ENCODE measurements at regions of chr3 and their contacts with region 1.

Region 1: DNA sequence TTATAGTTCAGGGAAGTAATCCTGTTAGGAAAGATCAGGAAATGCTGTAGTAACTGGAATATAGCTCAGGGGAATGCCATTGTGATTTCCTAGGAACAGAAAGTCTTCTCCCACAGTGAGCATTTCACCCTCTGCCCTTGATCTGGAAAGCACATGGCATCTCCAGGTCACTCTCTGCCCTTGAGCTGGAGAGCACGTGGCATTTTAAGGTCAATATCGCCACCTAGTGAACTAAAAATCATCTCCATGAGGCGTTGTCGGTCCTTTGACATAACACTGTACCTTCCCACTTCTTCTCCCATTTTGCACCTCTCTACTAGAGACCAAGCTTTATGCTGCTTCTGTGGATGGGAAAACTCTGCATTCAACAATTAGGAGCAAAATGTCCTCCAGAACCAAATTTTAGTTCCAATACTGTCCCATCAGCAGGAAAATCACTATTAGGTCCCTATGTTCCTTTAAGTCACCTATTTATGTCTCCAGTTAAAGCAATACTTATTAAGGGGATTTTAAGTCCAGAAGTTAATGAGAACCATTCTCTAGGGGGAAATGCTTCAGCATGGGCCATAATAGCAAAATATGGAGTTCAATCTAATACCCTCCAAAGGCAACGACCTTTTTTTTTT is 54.7 kb upstream of the GK5 start:
- DNase-seq: peak; percentile 76
- ATAC-seq: peak; percentile 91
- H3K4me3 ChIP-seq: no peak overlapping the region
- H3K27ac ChIP-seq: no peak overlapping the region
- H3K4me1 ChIP-seq: no peaks in the 10 kb centered on the region
- H3K27me3 ChIP-seq: no peaks in the 10 kb centered on the region
- CTCF ChIP-seq: peak; percentile 69

Region 2: GRCh38 chr3:141959921-141960554 is 320.0 kb before region 1 on chr3:
- CTCF ChIA-PET with region 1: no interaction called
- POLR2A ChIA-PET with region 1: no interaction called
- intact Hi-C with region 1: loop called (anchors 5 kb)
- DNase-seq: peak; percentile 68
- ATAC-seq: peak; percentile 79
- H3K4me3 ChIP-seq: no peak overlapping the region
- H3K27ac ChIP-seq: peak overlapping the region; percentile 0; the same call in 1 of the 2 replicates
- H3K4me1 ChIP-seq: peaks cover 18% of the 10 kb centered on the region
- H3K27me3 ChIP-seq: no peaks in the 10 kb centered on the region
- CTCF ChIP-seq: no peak

Region 3: GRCh38 chr3:142022381-142022780 is 257.7 kb before region 1 on chr3:
- CTCF ChIA-PET with region 1: no interaction called
- POLR2A ChIA-PET with region 1: no interaction called
- intact Hi-C with region 1: loop called (anchors 2 kb)
- DNase-seq: peak; percentile 6
- ATAC-seq: peak; percentile 53
- H3K4me3 ChIP-seq: no peak overlapping the region
- H3K27ac ChIP-seq: no peak overlapping the region
- H3K4me1 ChIP-seq: no peaks in the 10 kb centered on the region
- H3K27me3 ChIP-seq: no peaks in the 10 kb centered on the region
- CTCF ChIP-seq: peak; percentile 26; the same call in 1 of the 2 replicates

Region 4: GRCh38 chr3:142112596-142113098 is 167.4 kb before region 1 on chr3:
- CTCF ChIA-PET with region 1: no interaction called
- POLR2A ChIA-PET with region 1: no interaction called
- intact Hi-C with region 1: no loop called
- DNase-seq: no peak
- ATAC-seq: no peak
- H3K4me3 ChIP-seq: no peak overlapping the region
- H3K27ac ChIP-seq: no peak overlapping the region
- H3K4me1 ChIP-seq: peaks cover 5% of the 10 kb centered on the region
- H3K27me3 ChIP-seq: no peaks in the 10 kb centered on the region
- CTCF ChIP-seq: no peak

Region 5: DNA sequence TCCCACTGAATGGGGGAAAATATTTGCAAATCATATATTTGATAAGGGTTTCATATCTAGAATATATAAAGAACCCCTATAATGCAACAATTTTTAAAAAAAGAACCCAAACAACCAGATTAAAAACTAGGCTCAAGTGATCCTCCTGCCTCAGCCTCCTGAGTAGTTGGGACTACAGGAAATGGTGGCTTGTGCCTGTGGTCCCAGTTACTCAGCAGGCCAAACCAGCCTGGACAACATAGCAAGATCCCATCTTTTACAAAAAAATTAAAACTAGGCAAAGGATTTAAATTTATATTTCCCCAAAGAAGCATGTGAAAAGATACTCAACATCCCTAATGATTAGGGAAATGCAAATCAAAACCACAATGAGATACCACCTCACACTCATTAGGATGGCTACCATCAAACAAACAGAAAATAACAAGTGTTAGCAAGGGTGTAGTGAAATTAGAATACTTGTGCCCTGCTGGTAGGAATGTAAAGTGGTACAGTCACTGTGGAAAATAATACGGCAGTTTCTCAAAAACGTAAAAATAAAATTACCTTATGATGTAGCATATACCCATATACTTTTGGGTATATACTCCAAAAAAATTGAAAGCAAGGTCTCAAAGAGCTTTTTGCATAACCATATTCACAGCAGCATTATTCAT is 150.4 kb before region 1 on chr3:
- CTCF ChIA-PET with region 1: interaction called, 5 read pairs
- POLR2A ChIA-PET with region 1: no interaction called
- intact Hi-C with region 1: loop called (anchors 1 kb)
- DNase-seq: no peak
- ATAC-seq: no peak
- H3K4me3 ChIP-seq: no peak overlapping the region
- H3K27ac ChIP-seq: no peak overlapping the region
- H3K4me1 ChIP-seq: no peaks in the 10 kb centered on the region
- H3K27me3 ChIP-seq: no peaks in the 10 kb centered on the region
- CTCF ChIP-seq: peak; percentile 27; the same call in 1 of the 2 replicates

Region 6: GRCh38 chr3:142180761-142181362 is 99.2 kb before region 1 on chr3:
- CTCF ChIA-PET with region 1: no interaction called
- POLR2A ChIA-PET with region 1: no interaction called
- intact Hi-C with region 1: loop called (anchors 2 kb)
- DNase-seq: peak; percentile 37
- ATAC-seq: peak; percentile 40; the same call in 1 of the 2 replicates
- H3K4me3 ChIP-seq: no peak overlapping the region
- H3K27ac ChIP-seq: no peak overlapping the region
- H3K4me1 ChIP-seq: no peaks in the 10 kb centered on the region
- H3K27me3 ChIP-seq: no peaks in the 10 kb centered on the region
- CTCF ChIP-seq: peak; percentile 64

Region 7: DNA sequence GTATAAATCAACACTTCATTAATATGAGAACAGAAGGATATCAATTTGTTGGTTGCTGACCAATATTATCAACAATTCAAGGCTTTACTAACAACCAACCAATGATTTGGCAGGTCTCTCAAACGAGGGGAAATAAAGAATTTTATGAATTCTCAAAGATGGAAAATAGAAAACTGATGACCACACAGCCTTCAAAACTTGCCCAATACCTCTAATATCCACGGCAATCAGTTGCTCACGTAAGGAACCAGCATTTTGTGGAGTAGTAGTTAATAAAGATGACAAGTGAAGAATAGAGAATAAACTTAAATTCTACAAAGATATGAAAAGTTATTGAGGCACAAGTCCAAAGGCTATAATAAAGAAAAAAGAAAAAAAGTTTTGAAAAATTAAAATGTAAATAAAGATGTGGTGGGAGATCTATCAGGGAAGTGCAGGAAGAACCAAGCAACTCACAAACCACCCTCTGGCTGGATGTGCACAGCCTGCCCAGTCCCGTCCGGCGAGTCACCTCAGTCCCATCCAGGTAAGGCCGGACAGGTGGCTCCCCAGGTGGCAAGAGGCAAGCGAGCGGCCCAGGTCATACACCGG is 55.5 kb before region 1 on chr3:
- CTCF ChIA-PET with region 1: no interaction called
- POLR2A ChIA-PET with region 1: no interaction called
- intact Hi-C with region 1: loop called (anchors 5 kb)
- DNase-seq: no peak
- ATAC-seq: no peak
- H3K4me3 ChIP-seq: peak overlapping the region; percentile 90
- H3K27ac ChIP-seq: peak overlapping the region; percentile 58; the same call in 1 of the 2 replicates
- H3K4me1 ChIP-seq: peaks cover 6% of the 10 kb centered on the region; the same call in 1 of the 2 replicates
- H3K27me3 ChIP-seq: no peaks in the 10 kb centered on the region
- CTCF ChIP-seq: no peak

Region 8: DNA sequence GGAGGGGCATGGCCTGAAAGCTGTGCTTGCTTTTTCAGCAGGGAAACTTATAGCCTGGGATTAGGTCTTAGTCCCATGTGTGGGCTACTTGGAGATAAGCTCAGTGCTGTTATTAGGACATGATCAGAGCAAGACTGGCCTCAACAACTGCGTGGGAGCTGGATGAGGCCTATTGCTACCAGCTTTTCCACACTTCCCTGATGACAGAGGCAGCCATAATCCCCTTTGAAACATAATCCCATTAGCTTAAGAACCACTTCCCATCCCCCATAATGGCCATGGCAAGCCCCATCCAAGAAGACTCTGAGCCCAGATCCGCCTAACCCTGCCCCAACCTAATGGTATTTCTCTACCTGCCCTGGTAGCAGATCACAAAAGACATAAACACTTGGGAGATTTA is 28.1 kb before region 1 on chr3:
- CTCF ChIA-PET with region 1: no interaction called
- POLR2A ChIA-PET with region 1: no interaction called
- intact Hi-C with region 1: no loop called
- DNase-seq: no peak
- ATAC-seq: no peak
- H3K4me3 ChIP-seq: no peak overlapping the region
- H3K27ac ChIP-seq: no peak overlapping the region
- H3K4me1 ChIP-seq: no peaks in the 10 kb centered on the region
- H3K27me3 ChIP-seq: no peaks in the 10 kb centered on the region
- CTCF ChIP-seq: no peak

Region 9: DNA sequence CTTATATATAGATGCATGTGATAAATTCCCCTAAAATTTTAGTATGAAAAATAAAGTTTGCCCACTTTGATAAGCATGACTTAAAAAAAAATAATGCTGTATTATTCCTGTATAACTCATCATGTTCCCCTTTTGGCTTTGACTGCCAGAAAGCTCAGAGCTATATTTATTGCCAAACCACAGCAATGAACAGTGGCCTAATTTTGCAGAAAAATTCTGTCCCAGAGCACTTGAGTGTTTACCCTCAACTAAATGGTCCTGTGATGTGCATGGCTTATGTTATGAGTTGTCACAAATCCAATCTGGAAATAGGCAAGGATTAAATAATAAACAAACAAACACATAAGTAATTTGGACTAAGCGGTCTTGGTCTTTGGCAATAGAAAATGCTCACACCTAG is 1291.5 kb after region 1 on chr3:
- CTCF ChIA-PET with region 1: no interaction called
- POLR2A ChIA-PET with region 1: no interaction called
- intact Hi-C with region 1: no loop called
- DNase-seq: no peak
- ATAC-seq: no peak
- H3K4me3 ChIP-seq: no peak overlapping the region
- H3K27ac ChIP-seq: no peak overlapping the region
- H3K4me1 ChIP-seq: peaks cover 5% of the 10 kb centered on the region; the same call in 1 of the 2 replicates
- H3K27me3 ChIP-seq: no peaks in the 10 kb centered on the region
- CTCF ChIP-seq: no peak